Gastrocnemius medialis (tissue), 4 donors: ENCODE measurements at regions of chr19 and their contacts with region 1.

Region 1: DNA sequence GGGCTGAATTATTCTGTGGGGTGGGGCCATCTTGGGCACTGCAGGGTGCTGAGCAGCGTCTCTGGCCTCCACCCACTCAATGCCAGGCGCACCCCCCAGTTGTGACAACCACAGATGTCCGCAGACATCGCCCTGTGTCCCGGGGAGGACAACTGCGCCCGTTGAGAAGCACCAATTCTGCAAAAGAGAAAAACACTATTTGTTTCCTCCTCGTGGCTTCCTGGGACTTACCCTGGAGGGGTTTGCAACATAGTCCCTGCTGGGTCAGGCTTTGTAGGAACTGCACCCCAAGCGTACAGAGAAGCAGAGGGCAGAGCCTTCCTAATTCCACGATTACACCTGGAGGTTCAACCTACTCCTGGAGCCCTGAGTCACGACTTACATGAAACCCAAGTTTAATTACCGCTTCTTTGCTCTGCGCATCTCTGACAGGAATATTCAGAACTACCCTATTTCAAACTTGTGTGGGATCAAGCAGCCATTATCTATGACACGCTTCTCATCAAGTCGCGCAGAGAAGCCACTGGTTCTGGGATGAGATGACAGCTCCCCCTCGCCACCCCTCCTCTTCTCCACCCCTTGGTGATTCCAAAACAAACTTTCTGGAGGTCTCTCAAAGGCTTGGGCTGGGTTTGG is 11.1 kb upstream of the SLC39A3 start:
- DNase-seq: no peak
- ATAC-seq: no peak
- H3K4me3 ChIP-seq: no peak overlapping the region
- H3K27ac ChIP-seq: no peak overlapping the region
- H3K4me1 ChIP-seq: peaks cover 0 to 6% of the 10 kb centered on the region in 2 donors
- H3K27me3 ChIP-seq: no peaks in the 10 kb centered on the region
- CTCF ChIP-seq: no peak
- POLR2A ChIP-seq: no peak

Region 2: DNA sequence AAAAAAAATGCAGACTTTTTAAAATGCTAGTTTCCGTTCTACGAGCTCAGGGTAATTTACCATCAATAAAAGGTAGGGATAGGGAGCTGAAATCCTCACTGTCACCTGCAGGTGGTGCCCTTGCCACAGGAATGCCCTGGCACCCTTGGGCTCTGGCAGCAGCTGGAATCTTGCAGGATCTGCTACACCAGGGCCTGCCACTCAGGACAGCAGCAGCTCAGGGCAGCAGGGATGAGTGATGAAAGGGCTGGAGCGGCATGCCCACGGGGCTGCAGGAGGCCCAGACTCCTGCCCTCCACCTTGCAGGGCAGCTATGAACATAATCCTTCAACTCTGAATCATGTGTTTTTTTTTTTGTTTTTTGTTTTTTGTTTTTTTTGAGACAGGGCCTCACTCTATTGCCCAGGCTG is 102.4 kb before region 1 on chr19:
- in situ Hi-C with region 1: loop called (anchors 5 to 10 kb)
- intact Hi-C with region 1: loop called (anchors 1 kb)
- DNase-seq: peak in 1 of 2 donors; percentile 55
- ATAC-seq: peak; percentile 47 to 56
- H3K4me3 ChIP-seq: no peak overlapping the region
- H3K27ac ChIP-seq: no peak overlapping the region
- H3K4me1 ChIP-seq: no peaks in the 10 kb centered on the region
- H3K27me3 ChIP-seq: peaks cover 0 to under 1% (median 0%) of the 10 kb centered on the region in 3 donors
- CTCF ChIP-seq: peak; percentile 64 to 80 (median 71)
- POLR2A ChIP-seq: no peak

Region 3: DNA sequence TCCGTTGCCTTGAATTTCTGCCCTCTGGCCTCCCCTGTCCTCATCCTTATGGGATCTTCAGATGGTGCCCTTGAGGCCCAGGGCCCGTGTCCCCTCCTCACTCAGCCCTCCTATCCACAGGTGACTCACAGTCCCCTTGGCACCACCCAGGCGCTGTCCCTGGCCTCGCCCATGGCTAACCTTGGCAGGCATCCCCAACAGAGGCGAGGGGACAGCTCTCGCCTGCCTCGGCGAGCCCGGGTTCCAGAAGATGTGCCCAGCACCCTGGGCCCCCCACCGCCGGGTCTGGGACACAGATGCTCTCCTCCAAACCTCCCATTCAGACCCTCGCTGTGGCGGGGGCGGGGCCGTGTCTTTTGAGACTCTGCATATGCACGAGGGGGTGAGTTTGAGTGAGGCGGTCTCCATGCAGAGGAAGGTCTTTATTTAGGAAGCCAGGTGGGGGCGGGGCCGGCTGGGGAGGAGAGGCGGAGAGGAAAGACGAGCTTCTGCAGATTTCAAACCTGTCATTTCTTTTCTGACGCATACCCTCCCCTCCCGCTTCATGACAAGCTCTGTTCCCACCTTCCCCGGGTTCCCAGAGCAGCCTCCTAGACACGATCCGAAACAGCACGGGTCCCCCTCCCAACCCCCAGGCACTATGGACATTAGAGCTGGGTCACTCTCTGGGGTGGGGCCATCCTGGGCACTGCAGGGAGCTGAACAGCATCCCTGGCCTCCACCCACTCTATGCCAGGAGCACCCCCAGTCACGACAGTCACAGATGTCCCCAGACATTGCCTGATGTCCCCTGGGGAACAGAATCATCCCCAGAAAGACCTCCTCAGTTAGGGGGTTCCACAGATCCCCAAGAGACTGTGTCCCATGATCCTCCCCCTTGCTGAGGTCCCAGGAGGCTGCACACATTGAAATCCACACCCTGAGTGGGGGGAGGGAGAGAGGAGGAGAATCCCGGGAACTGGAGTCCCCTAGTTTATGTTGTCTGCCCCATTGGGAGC is 96.9 kb before region 1 on chr19:
- in situ Hi-C with region 1: loop called (anchors 5 to 10 kb)
- intact Hi-C with region 1: no loop called
- DNase-seq: no peak
- ATAC-seq: no peak
- H3K4me3 ChIP-seq: no peak overlapping the region
- H3K27ac ChIP-seq: no peak overlapping the region
- H3K4me1 ChIP-seq: no peaks in the 10 kb centered on the region
- H3K27me3 ChIP-seq: peaks cover 0 to 5% (median 0%) of the 10 kb centered on the region in 3 donors
- CTCF ChIP-seq: no peak
- POLR2A ChIP-seq: no peak

Region 4: GRCh38 chr19:2711172-2711874 is 39.6 kb before region 1 on chr19:
- in situ Hi-C with region 1: no loop called
- intact Hi-C with region 1: no loop called
- DNase-seq: no peak
- ATAC-seq: no peak
- H3K4me3 ChIP-seq: no peak overlapping the region
- H3K27ac ChIP-seq: no peak overlapping the region
- H3K4me1 ChIP-seq: no peaks in the 10 kb centered on the region
- H3K27me3 ChIP-seq: peaks cover 0 to 7% (median 3%) of the 10 kb centered on the region in 3 donors
- CTCF ChIP-seq: no peak
- POLR2A ChIP-seq: no peak

Region 5: DNA sequence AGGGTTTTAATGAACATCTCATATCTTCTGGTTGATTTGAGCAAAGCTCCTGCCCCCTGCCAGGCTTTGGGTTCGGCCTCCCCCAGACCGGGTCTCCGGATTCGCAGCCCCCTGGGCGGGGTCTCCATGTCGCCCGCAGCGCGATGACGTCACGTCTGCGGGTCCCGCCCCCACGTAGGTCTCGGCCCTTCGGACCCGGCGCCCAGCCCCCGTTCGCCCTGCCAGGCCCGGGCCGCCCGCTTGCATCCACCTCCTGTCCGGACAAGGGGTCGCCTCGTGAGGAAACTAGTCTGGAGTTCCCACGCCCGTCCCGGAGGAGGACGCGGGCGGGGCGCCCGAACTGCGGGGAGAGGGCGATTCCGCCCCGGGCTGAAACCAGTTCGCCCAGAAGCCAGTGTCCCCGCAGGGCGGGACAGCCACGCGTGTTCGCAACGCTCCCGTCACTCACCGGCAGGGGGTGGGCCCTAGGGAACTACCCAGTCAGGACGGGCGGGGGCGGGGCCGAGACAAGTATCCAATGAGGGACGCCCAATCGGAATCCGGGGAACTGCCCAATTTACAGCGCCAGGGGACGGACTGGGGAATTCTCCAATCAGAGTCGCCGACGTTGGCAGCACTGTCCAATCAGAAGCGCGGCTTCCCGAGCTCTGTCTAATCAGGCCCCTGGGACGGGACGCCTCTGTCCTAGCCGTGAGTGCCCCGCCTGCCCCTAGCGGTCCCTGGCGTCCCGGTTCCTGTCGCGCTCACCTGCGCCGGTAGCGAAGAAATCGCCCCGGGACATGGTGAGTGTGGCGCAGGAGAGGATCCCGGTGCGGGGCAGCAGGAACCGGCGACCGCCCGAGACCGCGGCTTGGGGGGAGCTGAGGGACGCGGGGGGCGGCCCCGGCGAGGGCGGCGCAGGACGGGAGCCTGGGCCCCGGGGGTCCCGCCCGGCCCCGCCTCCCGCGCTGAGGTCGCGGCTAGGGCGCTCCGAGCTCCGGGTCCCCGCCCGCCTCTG is 90.2 kb after region 1 on chr19 and contains the start of gene ZNF555:
- in situ Hi-C with region 1: no loop called
- intact Hi-C with region 1: no loop called
- DNase-seq: peak; percentile 99
- ATAC-seq: peak; percentile 99
- H3K4me3 ChIP-seq: peak within 1 kb of the TSS; percentile 69 to 85 (median 74)
- H3K27ac ChIP-seq: peak within 1 kb of the TSS; percentile 80 to 92 (median 86)
- H3K4me1 ChIP-seq: peaks cover 15 to 20% of the 10 kb centered on the region in 2 donors
- H3K27me3 ChIP-seq: no peaks in the 10 kb centered on the region
- CTCF ChIP-seq: peak; percentile 38 to 75 (median 68)
- POLR2A ChIP-seq: peak; percentile 56 to 79
- total RNA-seq, gene ZNF555: 1.9 to 5.5 (median 2.7) TPM